ENCODE measurements at regions of chr5 and their contacts with region 1.

Region 1: DNA sequence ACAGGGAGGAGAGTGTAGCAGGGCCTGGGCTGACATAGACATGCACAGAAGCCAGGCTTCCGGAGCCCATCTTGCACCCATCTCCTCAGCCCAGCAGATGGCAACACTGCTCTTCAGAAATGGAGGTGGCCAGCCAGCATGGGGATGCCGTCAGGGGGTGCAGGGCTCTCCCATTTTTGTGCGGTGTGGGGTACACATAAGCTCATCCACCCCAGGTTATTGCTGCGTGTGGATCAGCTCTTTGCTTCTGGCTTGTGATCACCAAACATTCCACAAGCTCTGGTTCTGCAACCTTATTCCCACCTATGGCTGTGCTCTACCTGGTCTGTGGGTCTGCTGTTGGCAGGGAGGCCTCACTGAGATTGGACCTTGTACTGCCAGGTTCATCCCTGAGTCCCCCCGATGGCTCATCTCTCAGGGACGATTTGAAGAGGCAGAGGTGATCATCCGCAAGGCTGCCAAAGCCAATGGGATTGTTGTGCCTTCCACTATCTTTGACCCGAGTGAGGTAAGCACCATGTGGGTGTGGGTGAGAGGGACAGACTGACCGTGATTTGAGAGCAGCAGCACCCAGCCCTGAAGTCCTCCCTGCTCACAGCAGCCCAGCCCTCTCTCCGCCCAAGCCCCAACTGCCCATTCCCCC is 17.3 kb downstream of the SLC22A5 start:
- DNase-seq: no peak
- H3K4me3 ChIP-seq: no peak overlapping the region
- CTCF ChIP-seq: peak; percentile 83

Region 2: DNA sequence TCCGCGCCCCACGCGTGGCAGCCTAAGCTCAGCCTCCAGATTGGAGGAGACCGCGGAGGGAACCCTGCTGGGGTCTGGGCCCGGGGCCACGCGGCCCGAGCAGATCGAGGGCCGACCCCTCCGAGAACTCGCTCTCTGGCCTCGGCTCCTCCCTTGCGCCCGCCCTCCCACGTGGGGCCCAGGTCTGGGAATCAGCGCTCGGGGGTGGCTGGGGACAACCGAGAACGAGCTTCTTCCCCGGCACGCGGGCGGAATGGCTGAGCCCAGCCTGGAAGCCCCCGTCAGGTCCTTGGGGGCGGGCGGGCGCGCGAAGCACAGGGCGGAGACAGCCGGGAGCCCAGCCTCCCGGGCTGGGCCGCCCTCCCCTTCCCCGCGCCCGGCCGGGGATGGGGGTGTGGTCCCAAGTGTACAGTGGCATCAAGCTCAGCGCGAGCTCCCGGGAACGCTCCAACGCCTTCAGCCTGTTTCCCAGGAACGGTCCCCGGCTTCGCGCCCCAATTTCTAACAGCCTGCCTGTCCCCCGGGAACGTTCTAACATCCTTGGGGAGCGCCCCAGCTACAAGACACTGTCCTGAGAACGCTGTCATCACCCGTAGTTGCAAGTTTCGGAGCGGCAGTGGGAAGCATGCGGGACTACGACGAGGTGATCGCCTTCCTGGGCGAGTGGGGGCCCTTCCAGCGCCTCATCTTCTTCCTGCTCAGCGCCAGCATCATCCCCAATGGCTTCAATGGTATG is 92.6 kb before region 1 on chr5 and contains the start of gene SLC22A4:
- in situ Hi-C with region 1: no loop called
- DNase-seq: peak; percentile 74
- H3K4me3 ChIP-seq: peak within 1 kb of the TSS; percentile 66
- CTCF ChIP-seq: no peak

Region 3: DNA sequence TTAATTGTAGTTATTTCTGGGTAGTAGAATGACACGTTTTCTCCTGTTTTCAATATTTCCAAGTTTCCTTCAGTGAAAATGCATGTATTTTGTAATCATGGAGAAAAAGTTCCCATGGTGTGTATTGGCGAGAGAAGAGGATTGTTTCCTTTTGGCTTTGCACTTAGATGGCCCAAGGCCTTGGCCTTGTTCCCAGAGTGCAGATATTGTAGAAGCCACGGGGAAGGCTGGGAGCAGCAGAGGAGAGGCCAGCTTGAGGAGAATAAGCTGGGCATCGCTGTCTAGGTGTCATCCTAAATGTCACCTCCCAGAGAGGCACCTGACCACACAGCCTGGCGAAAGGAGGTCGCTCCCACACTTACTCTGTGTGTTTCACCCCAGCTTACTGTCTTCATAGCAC is 59.9 kb after region 1 on chr5:
- in situ Hi-C with region 1: no loop called
- DNase-seq: peak; percentile 83
- H3K4me3 ChIP-seq: no peak overlapping the region
- CTCF ChIP-seq: no peak

Region 4: GRCh38 chr5:132476876-132477781 is 90.4 kb after region 1 on chr5:
- in situ Hi-C with region 1: loop called (anchors 5 kb)
- DNase-seq: no peak
- H3K4me3 ChIP-seq: no peak overlapping the region
- CTCF ChIP-seq: no peak

Region 5: DNA sequence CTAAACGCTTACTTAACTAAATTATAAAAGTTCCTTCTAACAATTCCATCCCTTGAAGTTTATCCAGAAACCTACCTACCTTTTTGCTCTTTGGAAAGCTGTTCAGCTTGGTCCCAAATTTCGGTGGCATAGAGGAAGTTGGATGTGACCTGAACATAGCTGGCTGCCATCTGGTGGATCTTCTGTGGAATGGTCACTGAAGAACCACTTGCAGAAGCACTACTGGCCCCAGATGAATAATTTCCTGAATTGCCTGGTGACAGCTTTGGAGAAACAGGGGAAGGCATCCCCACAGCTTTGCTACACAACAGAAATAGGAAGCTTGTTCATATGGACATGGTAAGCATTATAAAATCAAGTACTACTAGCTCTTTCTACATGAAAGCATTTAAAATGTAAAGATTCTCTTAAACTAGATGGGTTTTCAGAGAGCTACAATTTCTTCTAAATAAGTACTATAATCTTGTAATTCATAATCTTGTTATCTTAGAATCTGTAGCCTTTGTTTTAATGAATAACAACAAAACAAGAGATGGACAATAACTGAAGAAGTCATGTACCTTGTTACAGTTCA is 496.6 kb after region 1 on chr5:
- in situ Hi-C with region 1: loop called (anchors 10 kb)
- DNase-seq: peak; percentile 43
- H3K4me3 ChIP-seq: no peak overlapping the region
- CTCF ChIP-seq: peak; percentile 83